Dendritic cell treated with granulocyte-macrophage colony-stimulating factor and Interleukin-4, amounts not matched to agents 40 ng/mL and 50 ng/mL, for 4 days (primary cell): ENCODE measurements at regions of chr2 and their contacts with region 1.

Region 1: GRCh38 chr2:138028538-138028937 is 64.3 kb downstream of the HNMT start:
- H3K4me3 Mint-ChIP-seq: no peak overlapping the region
- H3K27ac Mint-ChIP-seq: no peak overlapping the region
- H3K4me1 Mint-ChIP-seq: peaks cover 8% of the 10 kb centered on the region
- H3K27me3 Mint-ChIP-seq: no peaks in the 10 kb centered on the region

Region 2: DNA sequence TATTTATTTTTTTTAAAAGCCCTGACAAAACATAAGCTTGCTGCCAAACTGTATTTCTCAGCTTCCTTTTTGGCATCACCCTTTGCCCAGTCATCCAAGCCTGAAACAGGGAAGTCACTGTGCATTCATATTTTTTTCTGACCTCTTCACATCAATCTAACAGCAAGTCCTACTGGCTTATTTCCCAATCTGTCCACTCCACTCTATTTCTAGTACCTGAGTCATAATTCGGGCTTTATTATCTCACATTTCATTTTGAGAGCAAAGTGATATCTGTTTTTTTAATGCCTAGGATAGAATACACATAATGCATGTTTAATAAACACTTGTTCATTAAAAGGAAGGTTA is 59.1 kb before region 1 on chr2:
- intact Hi-C with region 1: loop called (anchors 5 kb)
- H3K4me3 Mint-ChIP-seq: peak overlapping the region; percentile 47
- H3K27ac Mint-ChIP-seq: peak overlapping the region; percentile 96
- H3K4me1 Mint-ChIP-seq: peaks cover 46% of the 10 kb centered on the region
- H3K27me3 Mint-ChIP-seq: no peaks in the 10 kb centered on the region